Prostate gland (tissue), 2 donors: ENCODE measurements at regions of chr1 and their contacts with region 1.

Region 1: DNA sequence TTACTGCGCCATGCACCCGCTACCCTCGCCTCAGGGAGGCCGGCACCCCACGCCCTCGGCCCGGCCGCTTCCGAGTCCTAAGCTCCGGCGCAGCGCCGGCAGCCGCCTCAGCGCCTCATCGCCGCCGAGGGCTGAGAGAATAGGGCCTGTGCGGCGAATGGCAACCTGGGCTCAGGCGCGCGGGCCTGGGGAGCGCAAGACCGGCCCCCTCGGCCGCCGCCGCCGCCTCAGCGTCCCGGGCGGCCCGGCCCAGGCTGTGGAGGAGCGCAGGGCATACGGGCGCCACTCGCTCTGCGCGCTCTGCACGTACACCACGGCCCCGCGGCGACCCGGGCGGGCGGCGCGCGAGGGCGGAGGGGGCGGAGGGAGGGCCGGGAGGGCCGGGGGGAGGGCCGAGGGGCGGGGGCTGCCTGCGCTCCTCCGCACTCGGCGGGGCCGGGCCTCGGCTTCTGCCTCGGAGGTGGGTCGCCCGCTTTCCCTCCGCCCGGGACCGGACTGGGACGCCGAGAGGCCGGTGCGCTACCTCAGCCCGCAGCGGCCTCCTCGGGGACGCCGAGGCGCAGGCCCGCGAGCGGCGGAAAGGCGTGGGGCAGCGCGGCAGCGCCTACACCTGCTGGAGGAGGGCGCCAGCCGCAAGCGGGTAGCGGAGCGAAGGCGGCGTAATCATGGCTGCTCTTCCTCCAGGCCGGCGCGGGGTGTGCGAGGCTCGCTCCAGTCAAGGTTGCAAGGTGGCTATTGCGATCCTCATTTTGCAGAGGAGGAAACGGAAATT is at the start of gene EGLN1:
- DNase-seq: peak; percentile 76
- H3K4me3 ChIP-seq: peak within 1 kb of the TSS; percentile 66 to 70
- H3K27ac ChIP-seq: peak within 1 kb of the TSS; percentile 96
- H3K4me1 ChIP-seq: peaks cover 3% of the 10 kb centered on the region
- H3K27me3 ChIP-seq: no peaks in the 10 kb centered on the region
- CTCF ChIP-seq: peak in 3 of 4 experiments; percentile 18 to 41 (median 25)
- POLR2A ChIP-seq: peak; percentile 65
- total RNA-seq, gene EGLN1: 32.2 to 61.5 TPM

Region 2: DNA sequence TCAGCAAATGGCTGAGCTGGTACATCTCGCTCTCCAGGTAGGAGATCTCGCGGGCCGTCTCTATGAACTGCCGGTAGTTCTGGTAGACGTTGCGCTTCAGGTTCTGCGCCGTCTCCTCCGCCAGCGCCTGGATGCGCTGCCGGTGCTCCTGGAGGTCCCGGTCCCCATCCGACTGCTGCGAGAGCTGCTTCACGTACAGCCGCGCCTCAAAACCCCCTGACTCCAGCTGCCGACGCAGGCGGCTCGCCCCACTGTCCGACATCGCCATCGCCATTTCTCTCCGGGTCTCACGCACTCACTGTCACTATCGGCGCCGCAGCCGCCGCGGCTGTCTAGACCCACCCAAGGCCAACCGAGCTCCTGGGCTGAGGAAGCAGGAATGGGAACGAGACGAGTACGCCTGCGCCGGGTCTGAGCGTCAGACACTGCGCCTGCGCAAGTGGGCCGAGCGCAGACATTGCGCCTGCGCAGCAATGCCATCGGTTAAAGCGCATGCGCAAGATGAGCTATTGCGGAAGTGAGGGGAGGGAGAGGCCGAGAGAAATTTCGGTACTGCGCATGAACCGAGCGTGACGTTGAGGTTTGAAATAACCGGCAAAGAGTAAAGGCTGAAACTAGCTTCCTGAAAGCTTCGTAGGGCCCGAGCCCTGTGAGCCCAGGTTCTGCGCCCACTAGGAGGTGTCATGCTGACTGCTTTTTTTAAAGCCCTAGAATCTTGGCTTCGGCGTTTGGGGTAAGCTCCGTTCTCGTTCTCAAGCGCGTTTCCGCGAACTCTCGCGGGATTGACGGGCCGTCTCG is 84.5 kb before region 1 on chr1 and contains the start of gene EXOC8:
- intact Hi-C with region 1: loop called (anchors 5 kb)
- DNase-seq: peak; percentile 92
- H3K4me3 ChIP-seq: peak within 1 kb of the TSS; percentile 70 to 77
- H3K27ac ChIP-seq: peak within 1 kb of the TSS; percentile 76 to 87
- H3K4me1 ChIP-seq: peaks cover 7% of the 10 kb centered on the region
- H3K27me3 ChIP-seq: no peaks in the 10 kb centered on the region
- CTCF ChIP-seq: peak in 1 of 4 experiments; percentile 37
- POLR2A ChIP-seq: peak; percentile 86
- total RNA-seq, gene EXOC8: 11.9 to 14.8 TPM

Region 3: GRCh38 chr1:231383159-231383860 is 38.9 kb before region 1 on chr1:
- intact Hi-C with region 1: loop called (anchors 5 kb)
- DNase-seq: no peak
- H3K4me3 ChIP-seq: no peak overlapping the region
- H3K27ac ChIP-seq: no peak overlapping the region
- H3K4me1 ChIP-seq: no peaks in the 10 kb centered on the region
- H3K27me3 ChIP-seq: no peaks in the 10 kb centered on the region
- CTCF ChIP-seq: no peak
- POLR2A ChIP-seq: no peak

Region 4: GRCh38 chr1:231528172-231529029 is 106.2 kb after region 1 on chr1 and contains the start of gene TSNAX:
- intact Hi-C with region 1: loop called (anchors 2 kb)
- DNase-seq: peak; percentile 83
- H3K4me3 ChIP-seq: peak within 1 kb of the TSS; percentile 55 to 82
- H3K27ac ChIP-seq: peak within 1 kb of the TSS; percentile 90 to 91
- H3K4me1 ChIP-seq: no peaks in the 10 kb centered on the region
- H3K27me3 ChIP-seq: no peaks in the 10 kb centered on the region
- CTCF ChIP-seq: peak in 1 of 4 experiments; percentile 6
- POLR2A ChIP-seq: peak; percentile 77
- total RNA-seq, gene TSNAX: 23.5 to 41.2 TPM

Region 5: DNA sequence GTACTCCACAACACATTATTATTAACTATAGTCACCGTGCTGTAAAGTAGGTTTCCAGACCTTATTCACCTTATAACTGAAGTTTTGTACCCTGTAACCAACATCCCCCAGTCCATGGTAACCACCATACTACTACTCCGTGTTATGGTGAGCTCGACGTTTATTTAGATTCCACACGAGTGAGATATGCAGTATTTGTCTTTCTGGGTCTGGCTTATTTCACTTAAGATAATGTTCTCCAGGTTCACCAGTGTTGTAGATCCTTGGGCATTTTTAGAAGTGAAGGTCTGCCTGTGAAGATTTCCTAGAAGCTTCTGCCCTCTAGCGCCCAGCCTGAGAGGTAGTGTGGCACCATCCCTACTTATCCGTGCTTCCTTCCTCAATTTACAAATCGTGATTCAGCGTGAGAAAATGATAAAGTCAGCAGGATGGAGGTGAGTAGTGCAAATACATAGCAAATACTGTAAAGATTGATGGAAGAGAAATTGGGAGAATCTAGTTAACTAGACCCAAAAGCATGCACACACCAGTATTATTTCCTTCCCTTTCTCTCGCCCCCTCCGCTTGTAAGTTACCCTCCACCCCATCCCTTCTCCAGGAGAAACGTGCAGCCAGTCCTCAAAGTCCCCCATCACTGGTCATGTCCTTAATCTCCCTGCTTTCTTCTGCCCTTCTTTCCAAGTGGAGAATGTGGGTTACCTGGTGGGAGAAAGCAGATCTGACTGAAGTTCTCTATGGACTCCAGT is 168.4 kb after region 1 on chr1:
- intact Hi-C with region 1: loop called (anchors 5 kb)
- DNase-seq: peak; percentile 31
- H3K4me3 ChIP-seq: no peak overlapping the region
- H3K27ac ChIP-seq: no peak overlapping the region
- H3K4me1 ChIP-seq: no peaks in the 10 kb centered on the region
- H3K27me3 ChIP-seq: no peaks in the 10 kb centered on the region
- CTCF ChIP-seq: peak in 3 of 4 experiments; percentile 47 to 67 (median 60)
- POLR2A ChIP-seq: no peak